Spleen (tissue), 13 donors: ENCODE measurements at regions of chr12 and their contacts with region 1.

Region 1: GRCh38 chr12:120725659-120726509 is at the start of gene ACADS:
- DNase-seq: peak; percentile 98
- H3K4me3 ChIP-seq: peak within 1 kb of the TSS; percentile 59 to 91 (median 71)
- H3K27ac ChIP-seq: peak within 1 kb of the TSS; percentile 57 to 90 (median 84)
- H3K4me1 ChIP-seq: peaks cover 6 to 53% (median 29%) of the 10 kb centered on the region in 6 donors
- H3K27me3 ChIP-seq: no peaks in the 10 kb centered on the region
- CTCF ChIP-seq: peak in 3 of 11 experiments; percentile 12 to 46 (median 27)
- POLR2A ChIP-seq: peak in 1 of 3 donors; percentile 16
- total RNA-seq, gene ACADS: 21.4 to 55.1 (median 35.1) TPM

Region 2: GRCh38 chr12:120961604-120962531 is 236.0 kb after region 1 on chr12:
- intact Hi-C with region 1: loop called (anchors 10 kb)
- DNase-seq: no peak
- H3K4me3 ChIP-seq: no peak overlapping the region
- H3K27ac ChIP-seq: no peak overlapping the region
- H3K4me1 ChIP-seq: no peaks in the 10 kb centered on the region
- H3K27me3 ChIP-seq: no peaks in the 10 kb centered on the region
- CTCF ChIP-seq: no peak
- POLR2A ChIP-seq: no peak

Region 3: DNA sequence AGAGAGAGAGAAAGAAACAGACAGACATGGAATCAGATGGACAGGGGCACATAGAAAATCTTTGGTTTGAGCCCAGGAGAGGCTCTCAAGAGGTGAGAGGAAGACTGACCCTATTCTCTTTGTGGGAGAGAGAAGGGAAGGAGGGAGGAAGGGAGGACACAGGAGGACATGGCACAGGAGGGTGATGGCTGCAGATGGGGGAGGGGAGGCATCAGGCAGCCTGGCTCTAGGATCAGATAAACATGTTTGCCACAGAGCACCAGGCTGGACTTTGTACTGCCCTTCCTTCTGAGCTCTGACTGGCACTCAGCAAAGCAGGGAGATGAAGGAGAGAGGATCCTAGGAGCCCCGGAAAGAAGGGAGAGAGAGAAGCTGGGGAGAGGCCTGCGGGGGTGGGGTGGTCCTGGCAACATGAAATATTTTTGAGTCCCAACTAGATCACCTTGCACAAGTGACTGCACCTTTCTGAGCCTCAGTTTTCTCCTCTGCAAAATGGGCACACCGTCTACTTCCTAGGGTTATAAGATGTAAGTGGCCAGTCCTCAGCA is 258.5 kb after region 1 on chr12:
- intact Hi-C with region 1: no loop called
- DNase-seq: no peak
- H3K4me3 ChIP-seq: no peak overlapping the region
- H3K27ac ChIP-seq: no peak overlapping the region
- H3K4me1 ChIP-seq: no peaks in the 10 kb centered on the region
- H3K27me3 ChIP-seq: peaks cover 0 to 12% (median 0%) of the 10 kb centered on the region in 7 donors
- CTCF ChIP-seq: no peak
- POLR2A ChIP-seq: no peak